ENCODE measurements at regions of chr4 and their contacts with region 1.

Region 1: DNA sequence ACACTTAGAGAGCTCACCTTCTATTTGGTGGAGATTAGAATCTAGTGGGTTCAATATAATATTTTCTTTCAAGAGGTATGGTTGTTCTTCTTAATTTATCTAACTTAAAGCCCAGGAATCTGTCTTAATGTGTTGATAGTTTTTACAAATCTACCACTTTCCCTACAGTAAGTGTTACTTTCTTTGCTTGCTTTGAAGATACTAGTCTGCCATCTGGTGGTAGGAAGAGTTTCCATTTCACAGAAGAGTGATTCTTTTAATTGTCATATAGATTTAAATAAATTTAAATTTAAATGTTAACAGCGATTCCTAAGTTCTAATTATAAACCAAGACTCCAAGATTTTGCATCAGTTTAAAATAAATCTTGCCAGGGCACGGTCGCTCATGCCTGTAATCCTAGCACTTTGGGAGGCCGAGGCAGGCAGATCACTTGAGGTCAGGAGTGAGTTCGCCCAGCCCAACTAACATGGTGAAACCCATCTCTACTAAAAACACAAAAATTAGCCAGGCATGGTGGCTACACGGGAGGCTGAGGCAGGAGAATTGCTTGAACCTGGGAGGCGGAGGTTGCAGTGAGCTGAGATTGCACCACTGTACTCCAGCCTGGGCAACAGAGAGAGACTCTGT is 43.5 kb downstream of the NUDT9 start:
- DNase-seq: peak; percentile 69
- ATAC-seq: peak; percentile 65; the same call in 1 of the 2 replicates
- H3K4me3 ChIP-seq: no peak overlapping the region
- H3K27ac ChIP-seq: no peak overlapping the region
- H3K4me1 ChIP-seq: no peaks in the 10 kb centered on the region; the same call in 1 of the 2 replicates
- H3K27me3 ChIP-seq: no peaks in the 10 kb centered on the region
- CTCF ChIP-seq: peak; percentile 73
- POLR2A ChIP-seq: no peak
- RAD21 ChIP-seq: peak; percentile 74

Region 2: GRCh38 chr4:86908251-86908657 is 557.6 kb before region 1 on chr4:
- CTCF ChIA-PET with region 1: no interaction called
- POLR2A ChIA-PET with region 1: no interaction called
- dilution Hi-C with region 1: no loop called
- in situ Hi-C with region 1: loop called (anchors 25 kb)
- intact Hi-C with region 1: no loop called
- DNase-seq: peak; percentile 71
- ATAC-seq: peak; percentile 56
- H3K4me3 ChIP-seq: peak overlapping the region; percentile 6; the same call in 1 of the 2 replicates
- H3K27ac ChIP-seq: peak overlapping the region; percentile 72; the same call in 1 of the 2 replicates
- H3K4me1 ChIP-seq: peaks cover 5% of the 10 kb centered on the region
- H3K27me3 ChIP-seq: no peaks in the 10 kb centered on the region
- CTCF ChIP-seq: no peak
- POLR2A ChIP-seq: no peak
- RAD21 ChIP-seq: no peak

Region 3: GRCh38 chr4:87150498-87151261 is 315.2 kb before region 1 on chr4:
- CTCF ChIA-PET with region 1: interaction called, 3 read pairs
- POLR2A ChIA-PET with region 1: no interaction called
- dilution Hi-C with region 1: no loop called
- in situ Hi-C with region 1: no loop called
- intact Hi-C with region 1: loop called (anchors 1 kb)
- DNase-seq: peak; percentile 71
- ATAC-seq: peak; percentile 89
- H3K4me3 ChIP-seq: no peak overlapping the region
- H3K27ac ChIP-seq: no peak overlapping the region
- H3K4me1 ChIP-seq: no peaks in the 10 kb centered on the region
- H3K27me3 ChIP-seq: no peaks in the 10 kb centered on the region
- CTCF ChIP-seq: peak; percentile 82
- POLR2A ChIP-seq: no peak
- RAD21 ChIP-seq: peak; percentile 80

Region 4: GRCh38 chr4:87270144-87270543 is 195.7 kb before region 1 on chr4:
- CTCF ChIA-PET with region 1: no interaction called
- POLR2A ChIA-PET with region 1: no interaction called
- dilution Hi-C with region 1: no loop called
- in situ Hi-C with region 1: loop called (anchors 5 kb)
- intact Hi-C with region 1: loop called (anchors 1 kb)
- DNase-seq: peak; percentile 52
- ATAC-seq: peak; percentile 87
- H3K4me3 ChIP-seq: no peak overlapping the region
- H3K27ac ChIP-seq: no peak overlapping the region
- H3K4me1 ChIP-seq: no peaks in the 10 kb centered on the region
- H3K27me3 ChIP-seq: peaks cover 11% of the 10 kb centered on the region
- CTCF ChIP-seq: peak; percentile 64
- POLR2A ChIP-seq: no peak
- RAD21 ChIP-seq: peak; percentile 65

Region 5: GRCh38 chr4:87281603-87282002 is 184.2 kb before region 1 on chr4:
- CTCF ChIA-PET with region 1: no interaction called
- POLR2A ChIA-PET with region 1: no interaction called
- dilution Hi-C with region 1: no loop called
- in situ Hi-C with region 1: no loop called
- intact Hi-C with region 1: no loop called
- DNase-seq: no peak
- ATAC-seq: no peak
- H3K4me3 ChIP-seq: no peak overlapping the region
- H3K27ac ChIP-seq: no peak overlapping the region
- H3K4me1 ChIP-seq: no peaks in the 10 kb centered on the region
- H3K27me3 ChIP-seq: peaks cover 3% of the 10 kb centered on the region; the same call in 1 of the 2 replicates
- CTCF ChIP-seq: no peak
- POLR2A ChIP-seq: no peak
- RAD21 ChIP-seq: no peak

Region 6: DNA sequence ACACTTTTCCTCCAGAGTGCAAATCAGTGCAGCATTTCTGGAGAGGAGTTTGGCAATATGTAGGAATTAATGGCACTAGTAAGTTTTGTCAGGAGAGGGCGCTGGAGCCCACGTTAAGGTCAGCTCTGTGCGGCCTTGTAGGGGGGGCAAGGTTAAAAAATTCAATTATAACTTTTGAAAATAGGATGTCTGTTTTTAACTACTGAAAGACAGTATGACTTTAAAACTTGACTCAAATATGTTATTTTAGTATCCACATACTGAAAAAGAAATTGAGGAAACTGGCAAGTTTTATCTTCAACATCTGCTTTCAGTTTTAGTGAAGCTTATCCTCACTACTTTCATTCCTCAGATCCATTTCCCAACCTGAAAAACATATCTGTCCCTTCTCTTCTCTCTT is 112.3 kb before region 1 on chr4:
- CTCF ChIA-PET with region 1: interaction called, 4 read pairs
- POLR2A ChIA-PET with region 1: no interaction called
- dilution Hi-C with region 1: no loop called
- in situ Hi-C with region 1: no loop called
- intact Hi-C with region 1: loop called (anchors 5 kb)
- DNase-seq: peak; percentile 48
- ATAC-seq: peak; percentile 68
- H3K4me3 ChIP-seq: no peak overlapping the region
- H3K27ac ChIP-seq: no peak overlapping the region
- H3K4me1 ChIP-seq: peaks cover 2% of the 10 kb centered on the region; the same call in 1 of the 2 replicates
- H3K27me3 ChIP-seq: no peaks in the 10 kb centered on the region
- CTCF ChIP-seq: peak; percentile 62
- POLR2A ChIP-seq: no peak
- RAD21 ChIP-seq: peak; percentile 64

Region 7: DNA sequence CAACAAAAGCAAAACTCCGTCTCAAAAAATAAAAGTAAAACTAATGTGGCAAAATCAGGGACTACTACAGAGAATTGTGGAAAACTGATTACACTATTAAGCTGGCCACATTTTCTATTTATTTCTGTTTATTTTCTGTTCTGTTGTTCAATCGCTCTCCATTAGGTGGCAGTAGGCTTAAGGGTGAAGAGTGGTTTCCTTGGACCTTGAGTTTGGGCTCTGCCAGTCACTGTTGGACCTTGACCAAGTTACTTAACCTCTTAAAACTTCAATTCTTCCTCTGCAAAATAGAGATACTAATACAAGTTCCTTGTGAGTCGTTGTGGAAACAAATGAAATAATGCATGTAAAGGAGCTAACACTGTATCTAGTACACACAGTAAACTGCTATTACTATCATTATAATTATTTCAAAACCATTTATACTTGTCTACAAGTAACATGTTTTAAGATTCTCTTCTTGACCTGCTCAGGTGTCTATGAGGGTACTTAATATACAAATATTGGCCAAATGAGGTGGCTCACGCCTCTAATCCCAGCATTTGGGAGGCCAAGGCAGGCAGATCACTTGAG is 90.0 kb before region 1 on chr4:
- CTCF ChIA-PET with region 1: interaction called, 5 read pairs
- POLR2A ChIA-PET with region 1: no interaction called
- dilution Hi-C with region 1: no loop called
- in situ Hi-C with region 1: loop called (anchors 10 kb)
- intact Hi-C with region 1: loop called (anchors 1 kb)
- DNase-seq: peak; percentile 88
- ATAC-seq: peak; percentile 85
- H3K4me3 ChIP-seq: no peak overlapping the region
- H3K27ac ChIP-seq: no peak overlapping the region
- H3K4me1 ChIP-seq: no peaks in the 10 kb centered on the region; the same call in 1 of the 2 replicates
- H3K27me3 ChIP-seq: no peaks in the 10 kb centered on the region
- CTCF ChIP-seq: peak; percentile 81
- POLR2A ChIP-seq: no peak
- RAD21 ChIP-seq: peak; percentile 86

Region 8: GRCh38 chr4:87422104-87423052 is 43.5 kb before region 1 on chr4 and contains the start of gene NUDT9:
- CTCF ChIA-PET with region 1: no interaction called
- POLR2A ChIA-PET with region 1: no interaction called
- dilution Hi-C with region 1: no loop called
- in situ Hi-C with region 1: no loop called
- intact Hi-C with region 1: loop called (anchors 1 kb)
- DNase-seq: peak; percentile 96
- ATAC-seq: peak; percentile 96
- H3K4me3 ChIP-seq: peak within 1 kb of the TSS; percentile 64
- H3K27ac ChIP-seq: peak within 1 kb of the TSS; percentile 78
- H3K4me1 ChIP-seq: peaks cover 4% of the 10 kb centered on the region
- H3K27me3 ChIP-seq: no peaks in the 10 kb centered on the region
- CTCF ChIP-seq: no peak
- POLR2A ChIP-seq: peak; percentile 74
- RAD21 ChIP-seq: 0 out of 2 replicates have a peak, but pooled peaks have one; percentile 1
- total RNA-seq, gene NUDT9: 10.0 and 14.2 TPM in 2 replicates